Gastrocnemius medialis (tissue), 4 donors: ENCODE measurements at regions of chr5 and their contacts with region 1.

Region 1: DNA sequence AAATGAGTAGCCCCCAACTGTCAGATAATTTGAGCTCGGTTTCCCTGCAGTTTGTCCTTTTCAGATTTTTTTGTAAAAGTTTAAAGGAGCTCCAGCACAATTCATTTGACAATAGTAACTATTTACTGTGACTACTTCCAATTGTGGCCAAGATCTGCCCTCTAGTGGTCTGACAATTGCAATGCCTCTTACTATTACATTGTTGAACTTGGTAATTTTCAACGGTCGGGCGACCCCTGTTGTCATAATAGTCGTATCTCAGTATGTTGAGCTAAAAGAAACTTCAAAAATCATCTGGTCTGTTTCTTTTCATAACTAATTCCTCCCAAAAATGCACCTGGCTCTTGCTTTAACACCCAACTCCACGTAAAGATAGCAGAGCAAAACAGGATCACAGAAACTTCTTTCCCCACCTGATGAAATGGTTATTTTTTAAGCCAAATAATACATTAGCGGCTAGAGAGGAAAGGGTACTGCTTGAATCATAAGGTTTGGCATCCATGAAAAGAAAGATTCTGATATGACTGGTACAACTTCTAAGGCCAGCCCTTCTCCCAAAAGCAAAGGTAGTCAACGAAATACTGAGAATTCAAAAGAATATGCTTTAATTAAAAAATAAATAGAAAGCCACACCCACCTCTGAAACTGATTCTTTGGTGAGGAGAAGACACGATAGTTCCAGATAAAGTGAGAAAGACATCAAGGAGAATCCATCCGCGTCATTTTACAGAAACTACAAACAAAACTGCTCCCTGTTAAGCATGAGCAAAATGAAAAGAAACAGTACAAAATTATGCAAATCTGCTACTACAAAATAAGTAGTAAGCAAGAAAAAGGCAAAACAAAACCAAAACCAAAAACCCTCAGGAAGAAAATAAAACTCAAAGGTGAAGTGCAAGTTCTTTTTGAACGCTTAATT is 76.9 kb upstream of the HTR4 start:
- DNase-seq: peak; percentile 40 to 48
- ATAC-seq: peak; percentile 74 to 83
- H3K4me3 ChIP-seq: no peak overlapping the region
- H3K27ac ChIP-seq: no peak overlapping the region
- H3K4me1 ChIP-seq: no peaks in the 10 kb centered on the region
- H3K27me3 ChIP-seq: no peaks in the 10 kb centered on the region
- CTCF ChIP-seq: peak; percentile 58 to 88 (median 85)
- POLR2A ChIP-seq: no peak

Region 2: DNA sequence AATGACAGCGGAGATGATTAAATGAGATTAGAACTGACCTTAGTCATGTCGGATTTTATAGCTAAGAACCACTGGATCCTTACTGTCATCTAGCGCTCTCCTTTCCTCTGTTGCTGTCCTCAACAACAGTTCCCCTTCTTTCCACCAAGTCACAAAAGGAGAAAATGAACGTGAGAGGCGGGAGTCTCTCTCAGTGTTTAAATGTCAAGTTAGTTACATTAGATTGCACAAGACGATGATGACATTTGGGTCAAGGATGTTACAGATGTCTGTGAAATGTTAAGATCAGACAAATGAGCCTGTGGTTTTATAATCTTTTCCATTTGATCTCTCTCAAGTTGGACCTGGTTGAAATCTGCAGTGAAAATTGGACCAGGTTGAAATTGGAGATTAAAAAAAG is 294.0 kb before region 1 on chr5:
- in situ Hi-C with region 1: loop called in 1 of 4 experiments (anchors 5 kb)
- intact Hi-C with region 1: no loop called
- DNase-seq: no peak
- ATAC-seq: no peak
- H3K4me3 ChIP-seq: no peak overlapping the region
- H3K27ac ChIP-seq: no peak overlapping the region
- H3K4me1 ChIP-seq: no peaks in the 10 kb centered on the region
- H3K27me3 ChIP-seq: no peaks in the 10 kb centered on the region
- CTCF ChIP-seq: no peak
- POLR2A ChIP-seq: no peak

Region 3: DNA sequence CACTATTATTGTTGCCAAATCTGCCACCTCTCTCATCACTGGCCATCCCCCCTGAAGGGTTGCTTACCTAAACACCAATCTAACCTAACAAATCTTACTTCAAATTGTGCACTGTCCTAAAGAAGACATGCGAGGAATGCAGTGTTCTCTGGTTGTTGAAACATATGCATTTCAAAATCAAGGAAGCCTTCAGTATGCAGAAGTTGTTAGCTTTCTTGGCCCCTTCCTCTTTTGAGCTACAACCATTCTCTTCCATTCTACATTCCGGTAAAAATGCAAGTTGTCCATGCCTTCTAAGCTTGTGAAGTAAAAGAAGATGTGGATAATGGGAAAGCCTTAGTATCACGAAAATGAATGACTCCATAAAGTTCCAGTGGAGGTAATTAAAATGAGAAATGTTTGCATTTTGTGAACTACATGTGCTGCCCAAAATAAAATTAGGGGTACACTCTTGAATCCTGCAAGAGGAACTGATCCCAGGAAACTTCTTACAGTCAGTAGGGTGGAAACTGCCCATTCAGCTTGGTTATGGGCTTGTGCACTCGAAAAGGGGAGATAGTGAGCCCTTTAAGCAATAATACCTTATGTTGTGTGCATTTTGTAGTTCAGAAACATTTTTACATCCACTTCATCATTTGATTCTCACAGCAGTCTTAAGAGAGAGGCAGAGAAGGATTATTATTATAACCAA is 17.6 kb after region 1 on chr5:
- in situ Hi-C with region 1: no loop called
- intact Hi-C with region 1: no loop called
- DNase-seq: no peak
- ATAC-seq: no peak
- H3K4me3 ChIP-seq: no peak overlapping the region
- H3K27ac ChIP-seq: no peak overlapping the region
- H3K4me1 ChIP-seq: no peaks in the 10 kb centered on the region
- H3K27me3 ChIP-seq: no peaks in the 10 kb centered on the region
- CTCF ChIP-seq: no peak
- POLR2A ChIP-seq: no peak

Region 4: GRCh38 chr5:148768806-148769415 is 37.7 kb after region 1 on chr5:
- in situ Hi-C with region 1: no loop called
- intact Hi-C with region 1: no loop called
- DNase-seq: no peak
- ATAC-seq: no peak
- H3K4me3 ChIP-seq: no peak overlapping the region
- H3K27ac ChIP-seq: no peak overlapping the region
- H3K4me1 ChIP-seq: no peaks in the 10 kb centered on the region
- H3K27me3 ChIP-seq: no peaks in the 10 kb centered on the region
- CTCF ChIP-seq: no peak
- POLR2A ChIP-seq: no peak

Region 5: DNA sequence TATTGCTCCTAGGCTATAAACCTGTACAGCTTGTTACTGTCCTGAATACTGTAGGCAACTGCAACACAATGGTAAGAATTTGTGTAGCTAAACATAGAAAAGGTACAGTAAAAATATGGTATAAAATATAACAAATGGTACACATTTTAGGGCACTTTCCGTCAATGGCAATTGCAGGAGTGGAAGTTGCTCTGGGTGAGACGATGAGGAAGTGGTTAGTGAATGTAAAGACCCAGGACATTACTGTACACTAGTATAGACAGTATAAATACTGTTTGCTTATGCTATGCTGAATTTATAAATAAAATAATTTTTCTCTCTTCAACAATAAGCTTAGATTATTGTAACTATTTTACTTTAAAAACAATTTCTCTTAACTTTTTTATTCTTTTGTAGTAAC is 79.6 kb after region 1 on chr5:
- in situ Hi-C with region 1: loop called in 1 of 4 experiments (anchors 10 kb)
- intact Hi-C with region 1: no loop called
- DNase-seq: no peak
- ATAC-seq: no peak
- H3K4me3 ChIP-seq: no peak overlapping the region
- H3K27ac ChIP-seq: no peak overlapping the region
- H3K4me1 ChIP-seq: peaks cover 11 to 19% of the 10 kb centered on the region in 2 donors
- H3K27me3 ChIP-seq: no peaks in the 10 kb centered on the region
- CTCF ChIP-seq: no peak
- POLR2A ChIP-seq: no peak

Region 6: GRCh38 chr5:148998174-148998797 is 267.1 kb after region 1 on chr5:
- in situ Hi-C with region 1: loop called in 2 of 4 experiments (anchors 10 kb)
- intact Hi-C with region 1: no loop called
- DNase-seq: peak in 1 of 2 donors; percentile 30
- ATAC-seq: peak; percentile 55 to 68
- H3K4me3 ChIP-seq: no peak overlapping the region
- H3K27ac ChIP-seq: no peak overlapping the region
- H3K4me1 ChIP-seq: peaks cover 45 to 60% of the 10 kb centered on the region in 2 donors
- H3K27me3 ChIP-seq: no peaks in the 10 kb centered on the region
- CTCF ChIP-seq: peak; percentile 64 to 79 (median 71)
- POLR2A ChIP-seq: no peak

Region 7: DNA sequence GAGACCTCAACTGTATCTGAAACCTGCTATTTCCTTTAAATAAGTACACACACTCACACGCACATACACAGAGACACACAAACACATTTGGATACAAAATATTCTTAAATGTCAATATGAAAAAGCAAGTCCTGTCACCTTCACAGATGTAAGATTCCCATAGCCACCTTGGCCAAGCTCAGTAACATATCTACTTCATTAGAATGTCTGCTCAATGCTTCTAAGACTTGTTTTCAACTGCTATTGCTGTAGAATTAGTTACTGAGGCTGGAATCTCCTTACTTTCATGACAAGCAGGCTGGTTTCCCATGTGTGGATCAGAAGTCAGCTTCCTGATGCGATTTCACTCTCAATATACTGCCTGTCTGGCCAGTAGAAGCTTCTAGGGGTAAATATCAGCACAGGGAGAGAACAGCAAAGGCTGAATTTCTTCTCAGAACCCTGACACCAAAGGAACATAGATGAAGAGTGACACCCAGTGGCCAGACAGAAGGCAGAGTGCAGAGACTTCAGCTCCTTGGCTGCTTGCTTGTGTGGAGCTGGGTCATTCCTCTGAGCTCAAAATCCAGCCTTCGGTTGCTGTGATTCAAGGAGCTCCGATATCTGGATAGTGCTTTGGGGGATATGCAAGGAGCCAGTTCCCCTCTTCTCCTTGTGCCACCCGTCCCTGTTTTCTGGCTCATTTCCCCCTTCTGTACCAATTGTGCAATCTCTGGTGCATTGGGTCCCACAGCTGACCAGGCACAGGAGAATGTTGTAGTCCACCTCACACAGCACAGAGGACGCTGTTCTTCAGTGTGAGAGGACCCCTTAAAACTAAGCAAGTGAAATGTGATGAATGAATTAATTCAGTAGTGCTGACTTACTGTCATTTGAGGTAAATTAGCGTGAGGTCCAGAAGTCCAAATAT is 383.5 kb after region 1 on chr5:
- in situ Hi-C with region 1: loop called in 3 of 4 experiments (anchors 5 kb)
- intact Hi-C with region 1: loop called (anchors 2 kb)
- DNase-seq: peak; percentile 38 to 55
- ATAC-seq: peak; percentile 75 to 96
- H3K4me3 ChIP-seq: no peak overlapping the region
- H3K27ac ChIP-seq: peak overlapping the region in 2 of 4 donors; percentile 51 to 54
- H3K4me1 ChIP-seq: peaks cover 0 to 4% of the 10 kb centered on the region in 2 donors
- H3K27me3 ChIP-seq: no peaks in the 10 kb centered on the region
- CTCF ChIP-seq: peak; percentile 51 to 82 (median 68)
- POLR2A ChIP-seq: no peak